Psoas muscle (tissue), 8 donors: ENCODE measurements at regions of chr6 and their contacts with region 1.

Region 1: GRCh38 chr6:151690768-151691562 is 116.5 kb upstream of the ESR1 start:
- DNase-seq: no peak
- ATAC-seq: peak; percentile 50 to 82 (median 66)
- H3K4me3 ChIP-seq: peak overlapping the region; percentile 63
- H3K27ac ChIP-seq: peak overlapping the region; percentile 66
- H3K4me1 ChIP-seq: peaks cover 3% of the 10 kb centered on the region
- H3K27me3 ChIP-seq: no peaks in the 10 kb centered on the region
- CTCF ChIP-seq: no peak

Region 2: DNA sequence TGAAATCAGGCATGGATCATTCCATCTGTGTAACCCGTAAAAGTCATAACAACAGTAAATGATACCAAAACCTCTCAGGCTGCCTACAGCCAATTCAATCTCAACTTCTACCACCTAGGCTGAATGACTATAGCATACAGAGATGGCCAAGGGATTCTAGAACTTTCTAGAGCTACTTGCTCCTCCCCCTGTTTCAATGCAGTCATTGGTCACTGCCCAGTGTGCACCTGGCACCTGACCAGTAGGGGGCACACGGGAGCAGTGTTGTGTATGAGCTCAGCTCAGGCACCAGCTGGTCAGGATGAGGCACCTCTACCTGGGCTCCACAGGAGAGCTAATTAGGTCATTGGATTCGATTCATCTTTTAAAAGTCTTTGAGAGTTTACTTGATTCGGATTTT is 1005.1 kb before region 1 on chr6:
- intact Hi-C with region 1: no loop called
- DNase-seq: no peak
- ATAC-seq: no peak
- H3K4me3 ChIP-seq: no peak overlapping the region
- H3K27ac ChIP-seq: peak overlapping the region; percentile 27
- H3K4me1 ChIP-seq: no peaks in the 10 kb centered on the region
- H3K27me3 ChIP-seq: no peaks in the 10 kb centered on the region
- CTCF ChIP-seq: peak; percentile 45

Region 3: GRCh38 chr6:151036869-151037680 is 653.9 kb before region 1 on chr6:
- intact Hi-C with region 1: no loop called
- DNase-seq: no peak
- ATAC-seq: no peak
- H3K4me3 ChIP-seq: no peak overlapping the region
- H3K27ac ChIP-seq: peak overlapping the region; percentile 55
- H3K4me1 ChIP-seq: no peaks in the 10 kb centered on the region
- H3K27me3 ChIP-seq: no peaks in the 10 kb centered on the region
- CTCF ChIP-seq: no peak

Region 4: DNA sequence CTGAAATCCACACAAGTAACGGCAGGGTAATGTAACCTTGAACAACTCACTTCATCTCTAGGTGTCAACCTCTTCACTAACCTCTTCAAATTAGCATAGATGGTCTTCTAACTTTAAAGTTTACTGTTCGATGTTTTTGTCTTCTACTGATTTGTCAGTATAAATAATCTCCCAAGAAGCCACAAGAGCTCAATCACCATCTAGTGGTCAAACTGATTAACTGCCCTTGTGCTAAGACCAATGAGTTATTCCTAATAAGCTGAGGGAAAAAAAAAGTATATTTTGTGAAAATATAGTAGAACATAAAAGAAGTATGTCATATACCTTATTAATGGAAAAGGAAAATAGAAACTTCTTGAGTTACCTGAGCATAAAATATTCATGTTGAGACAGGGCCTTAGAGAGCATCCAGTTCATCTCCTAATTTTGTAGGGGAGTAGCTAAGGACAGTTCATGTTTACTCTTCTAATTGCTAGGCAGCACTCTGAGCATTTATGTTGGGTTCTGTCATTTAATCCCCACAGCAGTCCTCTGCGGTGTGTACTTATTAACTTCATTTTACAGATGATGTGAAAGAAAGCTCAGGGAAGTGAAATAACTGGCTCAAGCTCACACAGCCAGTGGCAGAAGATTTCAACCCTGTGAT is 433.6 kb after region 1 on chr6:
- intact Hi-C with region 1: loop called in 1 of 2 experiments (anchors 10 kb)
- DNase-seq: no peak
- ATAC-seq: peak; percentile 58 to 84 (median 68)
- H3K4me3 ChIP-seq: no peak overlapping the region
- H3K27ac ChIP-seq: peak overlapping the region; percentile 34
- H3K4me1 ChIP-seq: peaks cover 18% of the 10 kb centered on the region
- H3K27me3 ChIP-seq: no peaks in the 10 kb centered on the region
- CTCF ChIP-seq: peak; percentile 88